A673 (cell line): ENCODE measurements at regions of chr5 and their contacts with region 1.

Region 1: DNA sequence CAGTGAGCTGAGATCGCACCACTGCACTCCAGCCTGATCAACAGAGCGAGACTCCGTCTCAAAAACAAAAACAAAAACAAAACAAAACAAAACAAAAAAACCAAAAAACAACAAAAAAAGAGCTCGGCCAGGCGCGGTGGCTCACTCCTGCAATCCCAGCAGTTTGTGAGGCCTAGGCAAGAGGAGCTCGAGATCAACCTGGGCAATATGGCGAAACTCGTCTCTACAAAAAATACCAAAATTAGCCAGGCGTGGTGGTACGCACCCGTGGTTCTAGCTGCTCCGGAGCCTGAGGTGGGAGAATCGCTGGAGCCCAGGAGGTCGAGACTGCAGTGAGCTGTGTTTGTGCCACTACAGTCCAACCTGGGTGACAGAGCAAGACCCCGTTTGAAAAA is 20.1 kb downstream of the TRIM7 start:
- DNase-seq: no peak
- H3K4me3 ChIP-seq: peak overlapping the region; percentile 51
- H3K27ac ChIP-seq: no peak overlapping the region
- H3K4me1 ChIP-seq: peaks cover 6% of the 10 kb centered on the region
- H3K27me3 ChIP-seq: no peaks in the 10 kb centered on the region
- CTCF ChIP-seq: no peak

Region 2: DNA sequence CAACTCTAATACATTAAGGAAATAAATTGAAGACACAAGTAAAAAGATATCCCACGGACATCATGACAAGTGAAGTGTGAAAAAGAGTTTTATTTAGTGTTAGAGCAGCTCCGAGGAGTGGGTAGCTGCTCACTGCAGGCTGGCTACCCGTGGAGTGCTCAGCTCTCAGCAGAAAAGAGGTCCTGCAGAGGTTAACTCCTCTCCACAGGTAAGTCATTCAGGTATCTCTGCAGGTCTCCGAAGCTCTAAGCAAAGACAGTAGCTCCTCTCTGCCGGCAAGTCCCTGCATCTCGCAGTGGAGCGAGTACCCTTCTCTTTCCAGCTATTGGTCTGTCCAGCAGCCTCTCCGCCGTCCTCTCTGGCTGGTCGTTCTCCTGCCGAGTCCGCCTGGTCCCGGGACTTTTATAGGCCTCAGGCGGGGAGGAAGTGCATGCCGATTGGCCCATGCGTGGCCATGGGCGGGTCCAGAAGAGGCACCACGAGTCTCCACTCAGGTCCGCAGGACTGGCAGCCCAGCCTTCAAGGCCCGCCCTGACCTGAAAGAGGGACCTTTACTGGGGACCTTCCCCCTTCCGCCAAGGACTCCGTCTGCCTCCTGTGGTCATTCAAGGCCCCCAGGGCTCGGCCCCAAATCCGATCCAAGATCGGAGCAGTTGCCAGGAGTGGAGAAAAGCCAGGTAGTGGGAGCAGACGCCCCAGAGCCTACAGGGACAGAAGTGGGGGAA is 114.9 kb before region 1 on chr5:
- CTCF ChIA-PET with region 1: no interaction called
- POLR2A ChIA-PET with region 1: no interaction called
- intact Hi-C with region 1: no loop called
- DNase-seq: no peak
- H3K4me3 ChIP-seq: no peak overlapping the region
- H3K27ac ChIP-seq: no peak overlapping the region
- H3K4me1 ChIP-seq: no peaks in the 10 kb centered on the region
- H3K27me3 ChIP-seq: peaks cover 43% of the 10 kb centered on the region
- CTCF ChIP-seq: no peak

Region 3: GRCh38 chr5:181173420-181174342 is 11.2 kb before region 1 on chr5:
- CTCF ChIA-PET with region 1: interaction called, 8 read pairs
- POLR2A ChIA-PET with region 1: interaction called, 4 read pairs
- intact Hi-C with region 1: loop called (anchors 1 kb)
- DNase-seq: peak; percentile 56
- H3K4me3 ChIP-seq: peak overlapping the region; percentile 20
- H3K27ac ChIP-seq: no peak overlapping the region
- H3K4me1 ChIP-seq: no peaks in the 10 kb centered on the region
- H3K27me3 ChIP-seq: no peaks in the 10 kb centered on the region
- CTCF ChIP-seq: no peak

Region 4: DNA sequence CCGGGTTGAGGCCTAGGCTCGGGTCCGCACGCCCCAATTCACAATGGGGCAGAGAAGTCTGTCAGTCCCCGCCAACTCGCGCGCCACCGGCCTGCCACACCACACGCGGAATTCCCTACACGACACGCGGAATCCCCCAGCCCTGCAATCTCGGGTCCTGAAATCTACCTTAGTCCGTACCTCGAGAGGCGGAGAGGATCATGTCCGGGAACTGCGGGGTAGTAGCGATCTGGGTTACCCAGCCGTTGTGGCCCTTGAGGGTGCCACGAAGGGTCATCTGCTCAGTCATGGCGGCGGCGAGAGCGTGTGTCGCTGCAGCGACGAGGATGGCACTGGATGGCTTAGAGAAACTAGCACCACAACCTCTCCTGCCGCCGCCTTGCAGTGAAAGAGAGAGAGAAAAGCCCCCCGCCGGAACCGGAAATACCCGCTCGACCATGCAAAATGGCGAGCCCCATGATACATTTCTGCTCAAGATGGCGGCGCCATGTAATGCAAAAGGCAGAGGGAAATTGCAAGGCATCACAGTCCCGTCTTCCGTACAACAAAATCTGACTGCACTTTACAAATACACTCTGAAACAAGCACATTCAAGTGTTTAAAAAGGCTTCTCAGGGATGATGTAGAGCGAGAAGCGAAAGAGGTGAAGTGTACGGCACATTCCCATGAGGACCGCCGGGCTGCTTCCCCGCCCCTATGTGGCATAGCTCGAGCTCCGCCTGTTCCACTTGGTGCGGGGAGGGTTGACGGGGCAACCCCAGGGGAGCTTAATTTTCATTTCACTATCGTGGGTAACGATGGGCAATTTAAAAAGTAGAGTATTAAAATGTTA is 58.9 kb after region 1 on chr5 and contains the start of gene RACK1:
- CTCF ChIA-PET with region 1: no interaction called
- POLR2A ChIA-PET with region 1: no interaction called
- intact Hi-C with region 1: no loop called
- DNase-seq: peak; percentile 93
- H3K4me3 ChIP-seq: peak within 1 kb of the TSS; percentile 78
- H3K27ac ChIP-seq: peak within 1 kb of the TSS; percentile 96
- H3K4me1 ChIP-seq: peaks cover 41% of the 10 kb centered on the region
- H3K27me3 ChIP-seq: no peaks in the 10 kb centered on the region
- CTCF ChIP-seq: no peak
- total RNA-seq, gene RACK1: 1,719 and 1,726 TPM in 2 replicates

Region 5: GRCh38 chr5:181260387-181261319 is 75.8 kb after region 1 on chr5 and contains the start of gene TRIM52:
- CTCF ChIA-PET with region 1: no interaction called
- POLR2A ChIA-PET with region 1: no interaction called
- intact Hi-C with region 1: loop called (anchors 2 kb)
- DNase-seq: peak; percentile 91
- H3K4me3 ChIP-seq: peak within 1 kb of the TSS; percentile 98
- H3K27ac ChIP-seq: peak within 1 kb of the TSS; percentile 98
- H3K4me1 ChIP-seq: no peaks in the 10 kb centered on the region
- H3K27me3 ChIP-seq: no peaks in the 10 kb centered on the region
- CTCF ChIP-seq: no peak
- total RNA-seq, gene TRIM52: 7.3 and 7.9 TPM in 2 replicates